PC-9 (cell line): ENCODE measurements at regions of chr18 and their contacts with region 1.

Region 1: DNA sequence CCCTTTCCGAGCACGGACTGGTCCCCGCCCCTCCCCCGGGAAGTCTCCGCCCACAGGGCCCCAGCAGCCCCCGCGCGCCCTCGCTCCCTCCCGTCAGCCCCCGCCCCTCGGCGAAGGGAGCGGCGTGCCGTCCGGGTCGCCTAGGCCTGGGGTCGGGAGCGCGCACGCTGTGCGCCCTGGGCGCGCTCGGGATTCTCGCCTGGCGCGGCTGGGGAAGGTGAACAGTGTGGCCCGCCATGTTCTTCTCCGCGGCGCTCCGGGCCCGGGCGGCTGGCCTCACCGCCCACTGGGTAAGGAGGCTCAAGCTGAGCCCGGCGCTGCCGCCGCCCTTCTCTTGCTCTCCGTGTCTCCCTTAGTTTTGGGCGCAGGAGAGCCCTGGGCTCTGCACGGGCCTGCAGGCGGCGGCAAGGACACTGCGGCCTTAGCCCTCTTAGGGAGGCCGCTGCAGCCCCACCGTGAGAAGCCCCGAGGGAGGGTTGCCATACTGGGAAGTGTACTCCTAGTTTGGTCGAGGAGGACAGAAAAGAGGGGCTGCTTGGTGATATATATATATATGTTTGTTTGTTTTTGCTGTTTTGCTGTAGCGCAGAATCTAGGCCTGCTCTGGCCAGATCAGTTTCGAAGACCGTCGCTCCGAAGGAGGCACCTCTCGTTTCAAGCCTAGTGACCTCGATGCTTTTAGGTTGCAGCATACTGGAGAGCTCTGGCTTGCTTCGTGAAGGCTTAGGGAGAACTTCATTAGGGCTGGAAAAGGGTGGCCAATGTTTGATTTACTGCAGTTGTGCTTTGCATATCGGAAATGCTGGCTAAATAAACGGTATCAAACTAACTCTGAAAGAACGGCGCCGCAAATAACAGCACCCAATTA is at the start of gene NDUFV2:
- DNase-seq: peak; percentile 81 to 99
- H3K4me3 ChIP-seq: peak within 1 kb of the TSS; percentile 100
- H3K27ac ChIP-seq: peak within 1 kb of the TSS; percentile 86
- H3K4me1 ChIP-seq: peaks cover 40% of the 10 kb centered on the region
- H3K27me3 ChIP-seq: no peaks in the 10 kb centered on the region
- CTCF ChIP-seq: no peak
- total RNA-seq, gene NDUFV2: 182 and 215 TPM in 2 replicates

Region 2: GRCh38 chr18:8608795-8609658 is 493.7 kb before region 1 on chr18 and contains the start of gene RAB12:
- CTCF ChIA-PET with region 1: no interaction called
- POLR2A ChIA-PET with region 1: no interaction called
- intact Hi-C with region 1: loop called (anchors 1 kb)
- DNase-seq: peak; percentile 50 to 86
- H3K4me3 ChIP-seq: peak within 1 kb of the TSS; percentile 98
- H3K27ac ChIP-seq: peak within 1 kb of the TSS; percentile 79; the same call in 1 of the 2 replicates
- H3K4me1 ChIP-seq: peaks cover 41% of the 10 kb centered on the region
- H3K27me3 ChIP-seq: no peaks in the 10 kb centered on the region
- CTCF ChIP-seq: peak; percentile 58
- total RNA-seq, gene RAB12: 60.1 and 79.4 TPM in 2 replicates

Region 3: DNA sequence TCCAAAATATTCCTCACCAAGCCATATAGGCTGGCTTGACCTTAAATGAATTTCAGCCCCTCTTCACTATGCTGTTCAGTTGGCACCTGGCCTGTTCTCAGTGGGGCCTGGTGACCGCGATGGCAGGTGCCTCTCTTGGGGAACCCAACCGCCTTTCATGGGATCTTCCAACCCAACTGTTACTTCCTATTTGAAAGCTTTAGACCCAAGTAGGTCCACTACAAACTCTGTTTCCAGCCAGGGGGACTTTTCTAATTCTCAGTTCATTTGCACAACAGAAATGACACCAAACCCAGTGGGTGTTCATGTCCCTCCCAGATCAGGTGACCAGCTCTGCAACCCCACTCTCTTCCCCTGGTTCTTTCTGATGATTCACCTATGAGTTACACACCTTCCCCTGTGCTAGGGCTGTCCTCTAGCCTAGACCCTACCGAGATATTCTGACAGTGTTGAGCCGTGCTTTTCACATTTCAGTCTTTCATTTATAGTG is 35.9 kb before region 1 on chr18:
- CTCF ChIA-PET with region 1: interaction called, 4 read pairs
- POLR2A ChIA-PET with region 1: no interaction called
- intact Hi-C with region 1: loop called (anchors 2 kb)
- DNase-seq: no peak
- H3K4me3 ChIP-seq: no peak overlapping the region
- H3K27ac ChIP-seq: no peak overlapping the region
- H3K4me1 ChIP-seq: peaks cover 40% of the 10 kb centered on the region
- H3K27me3 ChIP-seq: no peaks in the 10 kb centered on the region
- CTCF ChIP-seq: no peak

Region 4: GRCh38 chr18:9117980-9118841 is 15.5 kb after region 1 on chr18:
- CTCF ChIA-PET with region 1: no interaction called
- POLR2A ChIA-PET with region 1: interaction called, 3 read pairs
- intact Hi-C with region 1: loop called (anchors 1 kb)
- DNase-seq: no peak
- H3K4me3 ChIP-seq: no peak overlapping the region
- H3K27ac ChIP-seq: peak overlapping the region; percentile 85; the same call in 1 of the 2 replicates
- H3K4me1 ChIP-seq: peaks cover 29% of the 10 kb centered on the region
- H3K27me3 ChIP-seq: no peaks in the 10 kb centered on the region
- CTCF ChIP-seq: no peak

Region 5: GRCh38 chr18:9404565-9405060 is 301.9 kb after region 1 on chr18:
- CTCF ChIA-PET with region 1: no interaction called
- POLR2A ChIA-PET with region 1: interaction called, 12 read pairs
- intact Hi-C with region 1: no loop called
- DNase-seq: no peak
- H3K4me3 ChIP-seq: no peak overlapping the region
- H3K27ac ChIP-seq: no peak overlapping the region
- H3K4me1 ChIP-seq: no peaks in the 10 kb centered on the region
- H3K27me3 ChIP-seq: no peaks in the 10 kb centered on the region
- CTCF ChIP-seq: no peak